CD14-positive monocyte (primary cell): ENCODE measurements at regions of chr5 and their contacts with region 1.

Region 1: GRCh38 chr5:172479044-172479783 is 24.9 kb upstream of the SH3PXD2B start:
- DNase-seq: peak; percentile 66 to 79 (median 77)
- H3K4me3 ChIP-seq: no peak overlapping the region
- H3K4me3 Mint-ChIP-seq: no peak overlapping the region
- H3K27ac ChIP-seq: no peak overlapping the region
- H3K27ac Mint-ChIP-seq: no peak overlapping the region
- H3K4me1 ChIP-seq: no peaks in the 10 kb centered on the region
- H3K4me1 Mint-ChIP-seq: peaks cover 2% of the 10 kb centered on the region
- H3K27me3 ChIP-seq: no peaks in the 10 kb centered on the region
- H3K27me3 Mint-ChIP-seq: peaks cover 2 to 8% (median 6%) of the 10 kb centered on the region in 3 donors
- CTCF ChIP-seq: peak; percentile 81

Region 2: DNA sequence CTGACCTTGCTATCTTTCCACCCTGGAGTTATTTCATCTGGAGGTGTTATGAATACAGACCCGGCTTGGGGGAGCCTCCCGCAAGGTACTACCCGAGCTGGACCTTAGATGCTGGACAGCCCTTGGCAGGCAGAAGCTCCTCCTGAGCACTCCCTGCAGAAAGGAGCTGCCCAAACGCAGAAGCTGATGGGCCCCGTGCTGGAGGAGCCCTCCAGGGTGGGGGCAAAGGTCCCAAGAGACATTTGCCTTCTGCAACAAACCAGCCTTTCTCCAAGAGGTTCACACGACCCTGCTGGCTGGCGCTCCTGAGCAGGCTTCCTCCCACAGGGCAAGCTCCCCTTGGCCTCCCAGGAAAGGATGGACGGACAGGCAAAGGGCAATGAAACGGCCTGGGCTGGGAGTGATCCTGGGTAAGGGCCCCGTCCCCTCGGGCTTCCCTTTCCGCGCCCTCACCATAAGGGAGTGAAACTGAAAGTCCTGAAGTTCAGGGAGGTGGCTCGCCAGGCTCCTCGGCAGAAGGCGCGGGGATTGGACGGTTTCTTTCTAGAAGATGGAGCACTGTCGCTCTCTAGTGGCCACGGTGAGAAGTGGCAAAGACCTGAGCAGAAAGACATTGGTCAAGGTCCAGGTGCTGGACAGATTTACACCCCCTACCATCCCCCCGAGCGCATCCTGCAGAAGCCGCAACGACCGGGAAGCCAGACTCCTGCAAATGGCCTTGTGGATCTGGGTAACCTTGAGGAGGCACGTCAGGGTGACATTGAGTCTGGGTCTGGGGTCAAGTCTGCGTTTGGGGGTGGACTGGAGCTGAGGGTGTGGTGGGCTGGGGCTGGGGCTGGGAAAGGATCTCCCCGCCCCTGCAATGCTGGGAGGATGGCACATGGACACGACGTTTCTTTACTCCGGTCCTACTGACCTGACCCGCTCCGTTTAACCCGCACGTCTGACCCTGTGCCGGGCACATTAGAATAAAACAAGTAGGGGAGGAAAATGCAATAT is 218.2 kb after region 1 on chr5:
- intact Hi-C with region 1: loop called (anchors 2 to 5 kb)
- DNase-seq: peak; percentile 85 to 90 (median 90)
- H3K4me3 ChIP-seq: peak overlapping the region; percentile 37 to 78 (median 56)
- H3K4me3 Mint-ChIP-seq: peak overlapping the region; percentile 85 to 94
- H3K27ac ChIP-seq: peak overlapping the region; percentile 22 to 75
- H3K27ac Mint-ChIP-seq: peak overlapping the region in 6 of 7 donors; percentile 73 to 92 (median 88)
- H3K4me1 ChIP-seq: peaks cover 20 to 27% of the 10 kb centered on the region in 2 donors
- H3K4me1 Mint-ChIP-seq: peaks cover 23% of the 10 kb centered on the region
- H3K27me3 ChIP-seq: peaks cover 0 to 10% of the 10 kb centered on the region in 2 donors
- H3K27me3 Mint-ChIP-seq: peaks cover 10 to 22% (median 19%) of the 10 kb centered on the region in 3 donors
- CTCF ChIP-seq: peak; percentile 91

Region 3: GRCh38 chr5:172920447-172920849 is 441.2 kb after region 1 on chr5:
- intact Hi-C with region 1: loop called in 1 of 2 experiments (anchors 10 kb)
- DNase-seq: no peak
- H3K4me3 ChIP-seq: no peak overlapping the region
- H3K4me3 Mint-ChIP-seq: no peak overlapping the region
- H3K27ac ChIP-seq: no peak overlapping the region
- H3K27ac Mint-ChIP-seq: peak overlapping the region in 1 of 7 donors; percentile 26
- H3K4me1 ChIP-seq: no peaks in the 10 kb centered on the region
- H3K4me1 Mint-ChIP-seq: peaks cover 7% of the 10 kb centered on the region
- H3K27me3 ChIP-seq: no peaks in the 10 kb centered on the region
- H3K27me3 Mint-ChIP-seq: peaks cover 0 to 4% (median 0%) of the 10 kb centered on the region in 3 donors
- CTCF ChIP-seq: no peak